Right lobe of liver (tissue), 6 donors: ENCODE measurements at regions of chr16 and their contacts with region 1.

Region 1: DNA sequence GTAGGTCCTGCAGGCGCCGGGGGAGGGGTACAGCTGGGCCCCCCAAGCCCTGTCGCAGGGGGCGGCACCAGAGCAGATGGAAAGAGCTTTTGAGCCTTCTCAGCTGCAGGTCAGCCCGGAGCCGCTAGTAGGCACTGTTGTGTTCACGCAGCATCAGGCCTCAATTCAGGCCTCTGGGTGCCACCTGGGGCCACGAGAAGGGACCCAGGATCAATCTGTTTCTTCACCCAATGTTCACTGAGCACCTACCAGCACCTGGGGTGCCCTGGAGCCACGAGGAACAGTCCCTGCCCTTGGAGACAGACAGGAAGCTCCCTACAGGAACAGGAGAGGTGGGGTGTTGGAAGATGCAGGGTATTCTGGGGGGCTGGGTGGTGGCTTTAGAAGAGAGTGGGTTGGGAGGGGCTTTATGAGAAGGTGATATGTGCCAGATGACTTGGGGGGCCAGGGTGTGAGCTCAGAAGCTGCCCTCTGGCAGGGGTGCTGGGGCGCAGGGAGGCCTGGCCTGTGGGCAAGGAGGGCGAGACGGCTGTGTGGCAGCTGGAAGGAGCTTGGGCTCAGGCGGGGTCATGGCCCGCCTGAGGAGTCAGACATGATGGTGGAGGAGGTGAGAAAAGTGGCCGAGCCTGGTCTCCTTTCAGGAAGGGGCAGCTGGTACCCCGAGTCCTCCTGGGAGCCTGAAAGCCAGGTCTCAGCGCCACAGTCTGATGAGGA is 121.9 kb upstream of the GSE1 start:
- DNase-seq: no peak
- ATAC-seq: no peak
- H3K4me3 ChIP-seq: no peak overlapping the region
- H3K27ac ChIP-seq: peak overlapping the region in 2 of 3 donors; percentile 33 to 43
- H3K4me1 ChIP-seq: peaks cover 0 to 15% (median 7%) of the 10 kb centered on the region in 4 donors
- H3K27me3 ChIP-seq: no peaks in the 10 kb centered on the region
- CTCF ChIP-seq: peak; percentile 24 to 40 (median 30)
- POLR2A ChIP-seq: no peak

Region 2: GRCh38 chr16:85437166-85438055 is 53.8 kb before region 1 on chr16:
- intact Hi-C with region 1: loop called in 1 of 2 experiments (anchors 10 kb)
- DNase-seq: no peak
- ATAC-seq: peak in 1 of 4 donors; percentile 14
- H3K4me3 ChIP-seq: no peak overlapping the region
- H3K27ac ChIP-seq: no peak overlapping the region
- H3K4me1 ChIP-seq: no peaks in the 10 kb centered on the region
- H3K27me3 ChIP-seq: no peaks in the 10 kb centered on the region
- CTCF ChIP-seq: no peak
- POLR2A ChIP-seq: no peak